GM12878 (cell line): ENCODE measurements at regions of chr4 and their contacts with region 1.

Region 1: GRCh38 chr4:133154725-133155124 is 5.6 kb downstream of the PCDH10 start:
- DNase-seq: no peak
- ATAC-seq: peak; percentile 65
- H3K4me3 ChIP-seq: no peak overlapping the region
- H3K27ac ChIP-seq: no peak overlapping the region
- H3K4me1 ChIP-seq: no peaks in the 10 kb centered on the region
- H3K27me3 ChIP-seq: peaks cover 5 to 7% of the 10 kb centered on the region in 2 experiments; a peak in 3 of 4 replicates
- CTCF ChIP-seq: peak; percentile 45 to 48 (median 47); a peak in 5 of 6 replicates
- EP300 ChIP-seq: no peak
- POLR2A ChIP-seq: no peak
- RAD21 ChIP-seq: peak; percentile 46

Region 2: DNA sequence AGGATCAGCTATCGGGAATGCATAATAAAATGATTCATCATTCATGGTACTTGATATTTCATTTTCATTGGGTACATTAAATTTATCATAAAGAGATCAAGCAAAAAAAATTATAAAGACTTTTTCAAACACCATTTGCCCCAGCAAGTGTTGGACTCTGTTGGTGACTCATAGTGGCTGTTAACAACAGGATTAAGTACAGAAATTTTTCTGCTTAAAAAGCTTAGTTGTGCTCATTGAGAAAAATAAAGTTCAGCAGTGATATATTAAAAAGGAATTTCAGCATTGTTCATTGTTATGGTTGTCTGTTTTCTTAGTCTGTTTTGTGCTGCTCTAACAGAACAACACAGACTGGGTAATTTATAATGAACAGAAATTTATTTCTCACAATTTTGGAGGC is 91.9 kb before region 1 on chr4:
- CTCF ChIA-PET with region 1: no interaction called
- POLR2A ChIA-PET with region 1: no interaction called
- RAD21 ChIA-PET with region 1: no interaction called
- SMC1A ChIA-PET with region 1: no interaction called
- in situ Hi-C with region 1: no loop called
- intact Hi-C with region 1: no loop called
- DNase-seq: no peak
- ATAC-seq: no peak
- H3K4me3 ChIP-seq: no peak overlapping the region
- H3K27ac ChIP-seq: no peak overlapping the region
- H3K4me1 ChIP-seq: no peaks in the 10 kb centered on the region
- H3K27me3 ChIP-seq: no peaks in the 10 kb centered on the region
- CTCF ChIP-seq: no peak
- EP300 ChIP-seq: no peak
- POLR2A ChIP-seq: no peak
- RAD21 ChIP-seq: no peak

Region 3: DNA sequence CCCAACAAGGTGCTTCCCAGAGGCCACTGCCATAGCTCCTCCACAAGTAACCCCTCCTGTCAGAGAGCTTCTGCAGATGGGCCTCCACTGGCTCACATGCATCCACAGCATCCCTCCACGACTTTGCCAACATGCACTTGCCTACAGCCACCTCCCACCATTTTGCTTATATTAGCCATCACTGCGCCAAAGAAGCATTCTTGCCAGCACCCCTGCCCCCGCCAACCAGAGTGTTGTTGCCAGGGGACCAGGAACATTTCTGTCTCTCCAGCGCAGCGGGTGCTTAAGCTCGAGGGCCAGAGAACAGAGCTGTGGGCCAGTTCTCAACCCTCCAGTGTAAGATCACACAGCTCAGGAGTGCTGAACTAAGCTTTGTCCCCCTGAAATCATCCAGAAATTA is 529.2 kb after region 1 on chr4:
- CTCF ChIA-PET with region 1: no interaction called
- POLR2A ChIA-PET with region 1: no interaction called
- RAD21 ChIA-PET with region 1: no interaction called
- SMC1A ChIA-PET with region 1: no interaction called
- in situ Hi-C with region 1: no loop called
- intact Hi-C with region 1: no loop called
- DNase-seq: no peak
- ATAC-seq: no peak
- H3K4me3 ChIP-seq: no peak overlapping the region
- H3K27ac ChIP-seq: no peak overlapping the region
- H3K4me1 ChIP-seq: no peaks in the 10 kb centered on the region
- H3K27me3 ChIP-seq: no peaks in the 10 kb centered on the region
- CTCF ChIP-seq: no peak
- EP300 ChIP-seq: no peak
- POLR2A ChIP-seq: no peak
- RAD21 ChIP-seq: no peak

Region 4: DNA sequence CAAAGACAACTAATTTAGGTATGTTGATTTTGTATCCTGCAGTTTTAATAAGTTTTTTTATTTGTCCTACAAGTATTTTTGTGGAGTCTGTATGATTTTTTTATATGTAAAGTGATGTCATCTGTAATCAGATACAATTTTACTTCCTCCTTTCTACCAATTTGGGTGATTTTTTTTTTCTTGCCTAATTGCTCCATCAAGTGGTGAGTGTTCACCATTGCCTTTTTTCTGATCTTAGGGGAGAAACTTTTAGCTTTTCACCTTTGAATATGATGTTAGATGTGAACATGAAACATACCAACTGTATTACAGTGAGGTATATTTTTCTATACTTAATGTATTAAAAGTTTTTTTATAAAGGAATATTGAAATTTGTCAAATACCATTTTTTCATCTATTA is 684.6 kb after region 1 on chr4:
- CTCF ChIA-PET with region 1: interaction called, 16 read pairs
- POLR2A ChIA-PET with region 1: no interaction called
- RAD21 ChIA-PET with region 1: no interaction called
- SMC1A ChIA-PET with region 1: interaction called, 4 read pairs
- in situ Hi-C with region 1: no loop called
- intact Hi-C with region 1: no loop called
- DNase-seq: no peak
- ATAC-seq: no peak
- H3K4me3 ChIP-seq: no peak overlapping the region
- H3K27ac ChIP-seq: no peak overlapping the region
- H3K4me1 ChIP-seq: no peaks in the 10 kb centered on the region
- H3K27me3 ChIP-seq: no peaks in the 10 kb centered on the region
- CTCF ChIP-seq: no peak
- EP300 ChIP-seq: no peak
- POLR2A ChIP-seq: no peak
- RAD21 ChIP-seq: no peak